Activated CD4-positive, alpha-beta T cell treated with anti-CD3 and anti-CD28 coated beads, Interleukin-2, amount 10 ng/mL, durations not matched to agents 24 days and 14 days (primary cell): ENCODE measurements at regions of chr6 and their contacts with region 1.

Region 1: GRCh38 chr6:127516666-127517273 is 2.4 kb downstream of the MTCL3 start:
- DNase-seq: peak; percentile 86
- H3K4me3 Mint-ChIP-seq: peak overlapping the region; percentile 85
- H3K27ac Mint-ChIP-seq: peak overlapping the region; percentile 35
- H3K4me1 Mint-ChIP-seq: peaks cover 34% of the 10 kb centered on the region
- H3K27me3 Mint-ChIP-seq: peaks cover 24% of the 10 kb centered on the region

Region 2: GRCh38 chr6:125790358-125791150 is 1726.2 kb before region 1 on chr6 and contains the start of gene NCOA7:
- intact Hi-C with region 1: loop called (anchors 10 kb)
- DNase-seq: peak; percentile 95
- H3K4me3 Mint-ChIP-seq: peak within 1 kb of the TSS; percentile 96
- H3K27ac Mint-ChIP-seq: peak within 1 kb of the TSS; percentile 99
- H3K4me1 Mint-ChIP-seq: peaks cover 49% of the 10 kb centered on the region
- H3K27me3 Mint-ChIP-seq: no peaks in the 10 kb centered on the region
- total RNA-seq, gene NCOA7: 52.5 and 53.7 TPM in 2 replicates

Region 3: DNA sequence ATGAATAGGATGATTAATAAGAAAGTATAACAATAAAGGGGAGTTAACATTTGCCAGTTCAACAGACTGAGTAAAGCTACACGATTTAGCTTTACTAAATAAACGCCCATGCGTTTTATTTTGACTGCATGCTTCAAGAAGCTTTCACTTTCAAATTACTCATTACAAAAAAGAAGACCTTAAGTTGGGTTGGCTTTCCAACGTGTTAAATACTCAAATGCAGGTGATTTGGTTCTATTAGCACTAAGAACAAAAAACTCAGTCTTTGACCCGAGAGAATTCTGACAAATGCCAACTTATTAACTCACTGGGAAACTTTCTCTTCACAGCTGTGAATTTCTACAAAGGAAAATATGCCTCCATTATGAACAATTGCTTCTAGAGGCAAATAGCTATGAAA is 225.3 kb before region 1 on chr6:
- intact Hi-C with region 1: loop called (anchors 1 kb)
- DNase-seq: no peak
- H3K4me3 Mint-ChIP-seq: peak overlapping the region; percentile 20
- H3K27ac Mint-ChIP-seq: peak overlapping the region; percentile 76
- H3K4me1 Mint-ChIP-seq: peaks cover 26% of the 10 kb centered on the region
- H3K27me3 Mint-ChIP-seq: no peaks in the 10 kb centered on the region

Region 4: DNA sequence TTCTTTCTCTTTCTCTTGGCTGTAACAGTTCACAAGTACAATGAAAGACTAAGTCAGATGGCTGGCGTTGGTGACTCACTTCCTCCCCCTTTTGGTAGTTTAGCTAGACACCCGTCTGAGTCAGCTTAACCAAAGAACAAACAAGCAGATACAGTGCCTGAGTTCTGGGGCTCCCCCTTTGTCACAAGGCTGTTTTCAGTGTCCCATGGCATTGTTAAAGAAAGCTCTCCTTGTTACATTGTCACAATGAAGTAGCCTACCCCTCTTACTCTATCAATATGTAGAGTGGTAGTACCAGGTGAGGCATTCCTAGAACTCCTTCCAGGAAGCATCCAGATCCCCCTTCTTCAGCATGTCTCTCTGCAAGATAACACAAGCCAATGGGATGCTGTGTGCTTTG is 96.2 kb before region 1 on chr6:
- intact Hi-C with region 1: loop called (anchors 2 kb)
- DNase-seq: peak; percentile 92
- H3K4me3 Mint-ChIP-seq: peak overlapping the region; percentile 51
- H3K27ac Mint-ChIP-seq: peak overlapping the region; percentile 86
- H3K4me1 Mint-ChIP-seq: peaks cover 12% of the 10 kb centered on the region
- H3K27me3 Mint-ChIP-seq: no peaks in the 10 kb centered on the region

Region 5: DNA sequence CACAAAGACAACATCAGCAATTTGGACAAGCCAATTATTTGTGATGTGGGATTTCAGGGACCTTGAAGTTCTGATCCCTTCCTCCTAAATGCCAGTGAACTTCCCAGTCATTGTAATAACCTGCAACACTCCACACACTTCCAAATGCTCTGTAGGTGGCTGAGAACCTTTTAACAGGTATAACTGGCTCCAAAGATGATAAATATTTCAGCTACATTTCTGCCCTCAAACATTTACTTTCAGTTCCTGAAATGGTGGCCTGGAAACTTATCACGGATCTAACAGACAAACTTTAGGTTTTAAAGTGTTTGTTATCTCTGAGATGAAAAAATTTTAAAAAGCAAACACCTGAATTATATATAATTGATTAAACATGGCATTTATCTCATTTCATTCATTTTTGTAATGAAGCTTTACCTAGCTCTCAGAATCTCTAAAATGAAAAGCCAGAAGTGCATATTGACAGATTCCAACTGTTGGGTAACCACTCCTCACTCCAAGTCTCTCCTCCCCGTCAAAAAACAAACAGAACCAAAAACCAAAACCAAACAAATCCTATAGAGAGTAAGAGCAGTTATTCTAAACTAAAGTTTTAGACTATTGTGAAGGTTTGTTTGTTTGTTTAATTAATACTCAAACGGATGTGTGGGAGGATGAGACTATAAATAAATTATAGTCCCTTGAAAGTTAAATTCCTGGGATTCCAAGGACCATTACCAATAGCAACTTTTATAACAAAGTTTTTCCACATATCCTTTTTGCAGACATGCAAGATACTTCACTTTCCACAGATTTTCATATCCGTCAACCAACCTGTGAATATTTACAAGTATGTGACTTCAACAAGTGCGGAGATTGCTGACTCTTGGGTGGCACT is 45.2 kb before region 1 on chr6:
- intact Hi-C with region 1: no loop called
- DNase-seq: no peak
- H3K4me3 Mint-ChIP-seq: no peak overlapping the region
- H3K27ac Mint-ChIP-seq: no peak overlapping the region
- H3K4me1 Mint-ChIP-seq: peaks cover 3% of the 10 kb centered on the region
- H3K27me3 Mint-ChIP-seq: no peaks in the 10 kb centered on the region

Region 6: GRCh38 chr6:127484212-127484858 is 32.4 kb before region 1 on chr6:
- intact Hi-C with region 1: loop called (anchors 1 kb)
- DNase-seq: peak; percentile 75
- H3K4me3 Mint-ChIP-seq: peak overlapping the region; percentile 68
- H3K27ac Mint-ChIP-seq: peak overlapping the region; percentile 70
- H3K4me1 Mint-ChIP-seq: peaks cover 39% of the 10 kb centered on the region
- H3K27me3 Mint-ChIP-seq: no peaks in the 10 kb centered on the region

Region 7: GRCh38 chr6:127539272-127539671 is 22.5 kb after region 1 on chr6:
- intact Hi-C with region 1: loop called (anchors 1 kb)
- DNase-seq: no peak
- H3K4me3 Mint-ChIP-seq: no peak overlapping the region
- H3K27ac Mint-ChIP-seq: no peak overlapping the region
- H3K4me1 Mint-ChIP-seq: peaks cover 3% of the 10 kb centered on the region
- H3K27me3 Mint-ChIP-seq: peaks cover 27% of the 10 kb centered on the region